ENCODE measurements at regions of chr18 and their contacts with region 1.

Region 1: DNA sequence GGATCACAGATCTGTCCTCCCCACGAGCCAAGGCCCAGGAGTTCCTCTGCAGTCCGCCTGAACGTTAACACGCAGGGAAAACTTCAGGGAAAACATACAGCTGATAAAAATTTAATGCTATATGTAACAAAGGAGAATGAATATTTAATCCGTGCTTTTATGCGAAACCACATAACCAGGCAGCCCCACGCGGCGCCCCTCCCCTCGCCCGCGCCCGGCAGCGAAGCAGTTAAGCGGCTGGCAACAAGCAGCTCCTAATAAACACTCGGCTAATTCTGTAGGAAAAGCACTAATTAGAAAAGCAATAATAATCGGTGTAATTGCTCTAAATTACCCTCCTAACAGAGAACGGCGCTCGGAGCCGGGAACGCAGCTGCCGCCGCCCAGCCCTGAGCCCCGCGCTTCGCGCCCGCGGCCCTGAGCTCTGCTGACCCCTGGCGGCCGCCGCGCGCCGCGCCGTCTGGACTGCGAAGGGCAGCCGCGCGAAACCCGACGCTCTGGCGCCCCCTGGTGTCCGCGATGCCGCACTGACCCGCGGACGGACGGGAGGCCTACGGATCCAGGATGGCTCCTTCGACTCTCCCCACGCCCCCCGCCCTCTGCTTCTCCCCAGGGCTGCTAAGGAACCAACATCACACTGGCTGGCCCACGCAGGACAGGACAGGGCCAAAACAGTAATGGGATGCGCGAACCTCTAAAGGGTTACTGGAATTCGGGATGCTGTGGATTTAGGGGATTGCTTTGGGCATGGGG is 181.4 kb downstream of the SMAD2 start:
- DNase-seq: no peak
- H3K4me3 ChIP-seq: peak overlapping the region; percentile 40
- CTCF ChIP-seq: peak; percentile 96

Region 2: GRCh38 chr18:47100214-47100831 is 648.7 kb before region 1 on chr18:
- CTCF ChIA-PET with region 1: interaction called, 19 read pairs
- POLR2A ChIA-PET with region 1: no interaction called
- DNase-seq: no peak
- H3K4me3 ChIP-seq: no peak overlapping the region
- CTCF ChIP-seq: peak; percentile 75

Region 3: DNA sequence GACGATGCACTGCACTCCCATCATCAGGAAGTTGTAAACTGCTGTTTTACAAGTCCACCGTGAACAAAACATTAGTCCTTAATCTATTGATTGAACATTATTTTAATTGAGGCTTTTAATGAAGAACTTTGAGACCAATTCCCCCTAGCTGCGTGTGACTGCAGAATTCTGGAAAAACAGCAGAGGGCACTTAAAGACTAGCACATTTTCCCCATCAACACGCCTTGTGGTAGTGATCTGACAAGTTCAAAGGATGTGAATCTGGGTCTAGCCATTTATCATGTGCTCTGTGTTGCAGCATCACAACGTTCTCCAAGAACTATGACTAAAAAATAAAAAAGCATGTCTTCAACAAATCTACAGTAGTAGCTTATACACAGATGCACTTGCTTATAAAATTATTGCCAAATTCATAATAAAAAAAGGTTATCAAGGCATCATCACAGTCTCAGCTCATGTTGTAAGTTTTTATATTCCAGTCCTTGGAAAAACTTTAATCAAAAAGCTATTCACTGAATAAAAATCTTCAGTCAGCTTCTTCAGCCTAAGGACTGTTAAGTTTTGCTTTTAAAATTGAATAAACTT is 533.4 kb before region 1 on chr18:
- CTCF ChIA-PET with region 1: interaction called, 228 read pairs
- POLR2A ChIA-PET with region 1: no interaction called
- DNase-seq: peak; percentile 33
- H3K4me3 ChIP-seq: no peak overlapping the region
- CTCF ChIP-seq: peak; percentile 58

Region 4: DNA sequence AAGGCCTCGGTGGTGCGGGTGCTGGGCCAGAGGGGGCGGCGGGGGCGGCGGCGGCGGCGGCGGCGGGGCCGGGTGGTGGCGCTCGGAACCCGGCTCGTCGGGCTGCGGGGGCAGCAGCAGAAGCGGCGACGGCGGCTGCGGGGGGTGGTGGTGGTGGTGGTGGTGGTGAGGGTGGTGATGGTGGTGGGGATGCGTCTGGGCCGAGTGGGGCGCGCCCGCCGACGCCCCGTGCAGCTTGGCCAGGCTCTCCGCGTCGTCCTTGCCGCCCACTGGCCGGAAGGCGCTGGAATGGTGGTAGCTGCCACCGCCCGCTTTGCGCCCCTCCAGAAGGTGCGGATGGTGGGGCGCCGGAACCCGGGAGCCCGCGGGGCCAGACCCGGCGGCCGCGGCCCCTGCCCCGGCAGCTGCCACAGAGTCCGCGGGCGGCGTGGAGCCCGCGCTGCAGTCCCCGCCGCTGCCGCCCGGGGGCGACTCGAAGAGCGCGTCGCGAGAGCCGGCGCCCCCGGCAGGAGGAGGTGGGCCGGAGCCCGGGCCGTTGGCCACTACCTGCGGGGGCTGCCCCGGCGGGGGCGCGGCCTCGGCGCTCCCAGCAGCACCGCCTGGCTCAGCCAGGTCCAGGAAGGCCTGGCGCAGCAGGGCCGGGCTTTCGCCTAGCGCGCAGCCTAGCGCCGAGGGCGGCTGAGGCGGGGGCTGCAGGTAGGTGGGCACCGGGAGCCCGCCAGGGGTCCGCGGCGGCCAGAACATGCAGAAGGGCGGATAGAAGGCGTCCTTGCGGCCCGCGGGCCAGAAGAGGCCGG is 501.8 kb before region 1 on chr18:
- CTCF ChIA-PET with region 1: interaction called, 14 read pairs
- POLR2A ChIA-PET with region 1: no interaction called
- DNase-seq: no peak
- H3K4me3 ChIP-seq: no peak overlapping the region
- CTCF ChIP-seq: peak; percentile 39

Region 5: GRCh38 chr18:47737956-47738355 is 11.1 kb before region 1 on chr18:
- CTCF ChIA-PET with region 1: interaction called, 48 read pairs
- POLR2A ChIA-PET with region 1: no interaction called
- DNase-seq: no peak
- H3K4me3 ChIP-seq: no peak overlapping the region
- CTCF ChIP-seq: no peak